ENCODE measurements at regions of chr2 and their contacts with region 1.

Region 1: GRCh38 chr2:237923481-237924163 is 43.2 kb upstream of the UBE2F start:
- DNase-seq: peak; percentile 80
- H3K4me3 Mint-ChIP-seq: peak overlapping the region; percentile 37
- H3K27ac Mint-ChIP-seq: no peak overlapping the region
- H3K4me1 Mint-ChIP-seq: peaks cover 38% of the 10 kb centered on the region
- H3K27me3 Mint-ChIP-seq: peaks cover 2% of the 10 kb centered on the region

Region 2: DNA sequence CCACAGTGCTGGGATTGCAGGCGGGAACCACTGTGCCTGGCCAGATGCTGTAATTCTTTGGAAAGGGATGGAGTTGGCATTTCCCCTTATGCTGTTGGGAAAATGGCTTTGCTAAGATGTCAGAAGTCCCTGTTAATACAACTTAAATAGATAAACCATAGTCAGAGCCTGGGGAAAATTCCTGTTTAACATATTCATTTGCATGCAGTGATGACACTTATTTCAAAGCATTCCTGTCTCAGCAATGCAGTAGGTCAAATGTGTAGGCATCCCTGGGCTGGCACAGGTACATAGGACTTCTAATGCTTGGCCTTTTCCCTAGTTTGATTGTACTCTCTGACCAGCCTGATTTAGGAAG is 25.6 kb before region 1 on chr2:
- CTCF ChIA-PET with region 1: interaction called, 16 read pairs
- POLR2A ChIA-PET with region 1: interaction called, 7 read pairs
- DNase-seq: no peak
- H3K4me3 Mint-ChIP-seq: peak overlapping the region; percentile 49
- H3K27ac Mint-ChIP-seq: peak overlapping the region; percentile 99
- H3K4me1 Mint-ChIP-seq: peaks cover 64% of the 10 kb centered on the region
- H3K27me3 Mint-ChIP-seq: no peaks in the 10 kb centered on the region

Region 3: GRCh38 chr2:237966565-237967462 is 43.2 kb after region 1 on chr2 and contains the start of gene UBE2F:
- CTCF ChIA-PET with region 1: interaction called, 13 read pairs
- POLR2A ChIA-PET with region 1: no interaction called
- DNase-seq: peak; percentile 97
- H3K4me3 Mint-ChIP-seq: peak within 1 kb of the TSS; percentile 76
- H3K27ac Mint-ChIP-seq: peak within 1 kb of the TSS; percentile 66
- H3K4me1 Mint-ChIP-seq: peaks cover 39% of the 10 kb centered on the region
- H3K27me3 Mint-ChIP-seq: peaks cover 2% of the 10 kb centered on the region
- total RNA-seq, gene UBE2F: 77.5 to 82.7 TPM